ENCODE measurements at regions of chr2 and their contacts with region 1.

Region 1: GRCh38 chr2:84486441-84487115 is 27.5 kb upstream of the SUCLG1 start:
- DNase-seq: no peak
- H3K4me3 ChIP-seq: no peak overlapping the region
- H3K4me3 Mint-ChIP-seq: no peak overlapping the region
- H3K27ac ChIP-seq: no peak overlapping the region
- H3K27ac Mint-ChIP-seq: no peak overlapping the region
- H3K4me1 ChIP-seq: peaks cover 11% of the 10 kb centered on the region
- H3K4me1 Mint-ChIP-seq: peaks cover 9 to 11% (median 11%) of the 10 kb centered on the region in 4 donors
- H3K27me3 ChIP-seq: no peaks in the 10 kb centered on the region
- H3K27me3 Mint-ChIP-seq: no peaks in the 10 kb centered on the region

Region 2: GRCh38 chr2:84362541-84362940 is 124.0 kb before region 1 on chr2:
- CTCF ChIA-PET with region 1: no interaction called
- POLR2A ChIA-PET with region 1: no interaction called
- intact Hi-C with region 1: no loop called
- DNase-seq: no peak
- H3K4me3 ChIP-seq: no peak overlapping the region
- H3K4me3 Mint-ChIP-seq: peak overlapping the region in 1 of 8 donors; percentile 31
- H3K27ac ChIP-seq: no peak overlapping the region
- H3K27ac Mint-ChIP-seq: no peak overlapping the region
- H3K4me1 ChIP-seq: no peaks in the 10 kb centered on the region
- H3K4me1 Mint-ChIP-seq: no peaks in the 10 kb centered on the region
- H3K27me3 ChIP-seq: no peaks in the 10 kb centered on the region
- H3K27me3 Mint-ChIP-seq: peaks cover 17 to 23% of the 10 kb centered on the region in 2 donors

Region 3: DNA sequence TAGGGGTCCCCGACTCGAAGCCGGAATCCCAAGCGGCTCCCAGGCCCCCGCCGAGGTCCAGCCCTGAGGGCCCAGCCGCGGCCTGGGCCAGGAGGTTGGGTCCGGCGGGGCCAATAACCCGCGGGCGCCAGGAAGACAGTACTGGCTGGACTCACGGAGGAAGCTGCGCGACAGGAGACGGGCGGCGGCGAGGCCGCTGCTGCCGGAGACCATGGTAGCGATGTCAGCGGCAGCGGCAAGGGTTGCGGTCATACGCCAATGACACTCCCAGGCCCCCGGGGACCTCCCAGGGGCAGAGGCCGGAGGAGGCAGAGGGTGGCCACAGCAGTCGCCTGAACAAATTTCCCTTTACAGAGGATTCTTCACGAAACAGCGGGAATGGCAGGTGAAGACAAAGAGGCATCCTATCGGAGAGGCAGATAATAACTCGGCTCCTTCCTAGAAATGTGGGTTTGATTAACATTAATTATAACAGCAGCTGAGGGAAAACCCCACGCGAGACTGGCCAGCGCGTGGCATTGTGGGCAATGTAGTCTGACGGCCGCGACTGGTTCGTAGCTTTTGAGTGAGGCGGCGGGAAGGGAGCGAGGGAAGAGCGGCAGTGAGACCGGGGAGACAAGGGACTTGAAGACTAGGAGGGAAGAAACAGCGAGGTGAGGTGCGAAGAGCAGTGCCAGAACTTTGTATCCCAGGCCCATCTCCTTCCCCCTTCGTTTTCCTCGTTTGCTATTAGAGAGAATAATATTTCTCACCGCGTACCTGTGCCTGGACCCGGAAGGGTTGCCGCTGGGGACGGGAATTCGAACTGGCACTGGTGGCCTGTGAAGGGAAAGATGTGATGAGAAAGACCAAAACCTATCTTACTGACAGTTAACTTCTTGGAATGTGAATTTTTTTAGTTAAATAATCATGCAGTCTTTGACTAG is 27.3 kb before region 1 on chr2 and contains the start of gene SUCLG1:
- CTCF ChIA-PET with region 1: no interaction called
- POLR2A ChIA-PET with region 1: interaction called, 3 read pairs
- intact Hi-C with region 1: loop called (anchors 2 kb)
- DNase-seq: peak; percentile 89 to 92 (median 90)
- H3K4me3 ChIP-seq: peak within 1 kb of the TSS; percentile 68 to 76
- H3K4me3 Mint-ChIP-seq: peak within 1 kb of the TSS; percentile 90 to 99 (median 91)
- H3K27ac ChIP-seq: peak within 1 kb of the TSS; percentile 77
- H3K27ac Mint-ChIP-seq: peak within 1 kb of the TSS; percentile 89 to 99 (median 98)
- H3K4me1 ChIP-seq: peaks cover 39% of the 10 kb centered on the region
- H3K4me1 Mint-ChIP-seq: peaks cover 36 to 49% (median 43%) of the 10 kb centered on the region in 4 donors
- H3K27me3 ChIP-seq: no peaks in the 10 kb centered on the region
- H3K27me3 Mint-ChIP-seq: no peaks in the 10 kb centered on the region
- total RNA-seq, gene SUCLG1: 46.5 to 46.6 TPM

Region 4: GRCh38 chr2:84539729-84540128 is 53.2 kb after region 1 on chr2:
- CTCF ChIA-PET with region 1: no interaction called
- POLR2A ChIA-PET with region 1: no interaction called
- intact Hi-C with region 1: no loop called
- DNase-seq: peak in 3 of 5 donors; percentile 21 to 32 (median 28)
- H3K4me3 ChIP-seq: no peak overlapping the region
- H3K4me3 Mint-ChIP-seq: peak overlapping the region in 6 of 8 donors; percentile 0 to 58 (median 27)
- H3K27ac ChIP-seq: no peak overlapping the region
- H3K27ac Mint-ChIP-seq: peak overlapping the region in 6 of 7 donors; percentile 4 to 80 (median 56)
- H3K4me1 ChIP-seq: peaks cover 17% of the 10 kb centered on the region
- H3K4me1 Mint-ChIP-seq: peaks cover 13 to 23% (median 15%) of the 10 kb centered on the region in 4 donors
- H3K27me3 ChIP-seq: no peaks in the 10 kb centered on the region
- H3K27me3 Mint-ChIP-seq: no peaks in the 10 kb centered on the region

Region 5: GRCh38 chr2:84735389-84735788 is 248.8 kb after region 1 on chr2:
- CTCF ChIA-PET with region 1: no interaction called
- POLR2A ChIA-PET with region 1: no interaction called
- intact Hi-C with region 1: no loop called
- DNase-seq: no peak
- H3K4me3 ChIP-seq: no peak overlapping the region
- H3K4me3 Mint-ChIP-seq: no peak overlapping the region
- H3K27ac ChIP-seq: no peak overlapping the region
- H3K27ac Mint-ChIP-seq: no peak overlapping the region
- H3K4me1 ChIP-seq: peaks cover 12% of the 10 kb centered on the region
- H3K4me1 Mint-ChIP-seq: peaks cover 4 to 21% (median 13%) of the 10 kb centered on the region in 4 donors
- H3K27me3 ChIP-seq: no peaks in the 10 kb centered on the region
- H3K27me3 Mint-ChIP-seq: no peaks in the 10 kb centered on the region

Region 6: GRCh38 chr2:85132834-85133637 is 646.5 kb after region 1 on chr2 and contains the start of gene TCF7L1:
- CTCF ChIA-PET with region 1: no interaction called
- POLR2A ChIA-PET with region 1: no interaction called
- intact Hi-C with region 1: no loop called
- DNase-seq: peak; percentile 4 to 41 (median 20)
- H3K4me3 ChIP-seq: peak within 1 kb of the TSS in 1 of 2 donors; percentile 24
- H3K4me3 Mint-ChIP-seq: peak within 1 kb of the TSS; percentile 65 to 85 (median 77)
- H3K27ac ChIP-seq: no peak within 1 kb of the TSS
- H3K27ac Mint-ChIP-seq: no peak within 1 kb of the TSS
- H3K4me1 ChIP-seq: peaks cover 18% of the 10 kb centered on the region
- H3K4me1 Mint-ChIP-seq: peaks cover 4 to 20% (median 12%) of the 10 kb centered on the region in 4 donors
- H3K27me3 ChIP-seq: peaks cover 16% of the 10 kb centered on the region
- H3K27me3 Mint-ChIP-seq: peaks cover 34 to 42% of the 10 kb centered on the region in 2 donors
- total RNA-seq, gene TCF7L1: not detected

Measured in CD4-positive, alpha-beta memory T cell (primary cell).